Activated CD8-positive, alpha-beta T cell treated with anti-CD3 and anti-CD28 coated beads, Interleukin-2, amount 10 ng/mL, durations not matched to agents 7 days and 5 days (primary cell): ENCODE measurements at regions of chr1 and their contacts with region 1.

Region 1: DNA sequence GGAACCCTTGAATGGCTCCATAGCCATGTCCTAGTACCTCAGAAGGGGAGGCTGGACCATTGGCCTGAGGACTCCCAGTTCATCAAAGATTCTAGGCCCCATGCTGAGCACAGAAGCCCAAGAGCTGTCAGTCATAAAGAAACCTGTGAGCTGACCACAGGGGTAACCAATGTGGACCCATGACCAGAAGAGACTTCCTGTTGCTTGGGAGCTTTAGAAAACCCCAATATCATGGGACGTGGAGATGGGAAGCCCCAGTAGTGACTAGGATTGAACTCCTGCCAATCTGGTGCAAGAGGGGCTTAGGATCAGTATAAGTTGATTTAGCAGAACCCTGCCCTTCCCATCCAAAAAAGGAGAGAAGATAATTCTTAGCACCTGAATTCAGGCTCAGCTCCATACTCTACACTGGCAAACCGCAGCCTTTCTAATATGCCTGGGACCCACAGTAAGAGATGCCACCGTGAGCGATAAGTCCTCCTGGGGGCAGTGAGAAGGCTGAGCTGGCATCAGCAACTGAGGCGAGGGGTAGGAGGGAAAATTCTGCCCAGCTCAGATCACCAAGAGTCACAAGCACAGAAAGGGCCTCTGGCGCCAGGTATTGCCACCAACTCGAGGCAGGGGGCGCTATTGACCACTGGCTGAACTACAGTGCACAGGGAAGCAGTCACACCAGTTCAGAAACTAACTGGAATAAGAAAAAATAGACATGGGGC is 108.9 kb downstream of the CAPN8 start:
- DNase-seq: peak; percentile 57
- ATAC-seq: peak; percentile 53
- H3K4me3 Mint-ChIP-seq: no peak overlapping the region
- H3K27ac Mint-ChIP-seq: no peak overlapping the region
- H3K4me1 Mint-ChIP-seq: peaks cover 5% of the 10 kb centered on the region
- H3K27me3 Mint-ChIP-seq: no peaks in the 10 kb centered on the region

Region 2: GRCh38 chr1:223390618-223391017 is 166.0 kb before region 1 on chr1:
- CTCF ChIA-PET with region 1: no interaction called
- POLR2A ChIA-PET with region 1: no interaction called
- DNase-seq: no peak
- ATAC-seq: no peak
- H3K4me3 Mint-ChIP-seq: no peak overlapping the region
- H3K27ac Mint-ChIP-seq: no peak overlapping the region
- H3K4me1 Mint-ChIP-seq: no peaks in the 10 kb centered on the region
- H3K27me3 Mint-ChIP-seq: peaks cover 24% of the 10 kb centered on the region

Region 3: GRCh38 chr1:223611936-223612335 is 55.4 kb after region 1 on chr1:
- CTCF ChIA-PET with region 1: interaction called, 11 read pairs
- POLR2A ChIA-PET with region 1: interaction called, 3 read pairs
- DNase-seq: no peak
- ATAC-seq: no peak
- H3K4me3 Mint-ChIP-seq: no peak overlapping the region
- H3K27ac Mint-ChIP-seq: no peak overlapping the region
- H3K4me1 Mint-ChIP-seq: no peaks in the 10 kb centered on the region
- H3K27me3 Mint-ChIP-seq: no peaks in the 10 kb centered on the region

Region 4: DNA sequence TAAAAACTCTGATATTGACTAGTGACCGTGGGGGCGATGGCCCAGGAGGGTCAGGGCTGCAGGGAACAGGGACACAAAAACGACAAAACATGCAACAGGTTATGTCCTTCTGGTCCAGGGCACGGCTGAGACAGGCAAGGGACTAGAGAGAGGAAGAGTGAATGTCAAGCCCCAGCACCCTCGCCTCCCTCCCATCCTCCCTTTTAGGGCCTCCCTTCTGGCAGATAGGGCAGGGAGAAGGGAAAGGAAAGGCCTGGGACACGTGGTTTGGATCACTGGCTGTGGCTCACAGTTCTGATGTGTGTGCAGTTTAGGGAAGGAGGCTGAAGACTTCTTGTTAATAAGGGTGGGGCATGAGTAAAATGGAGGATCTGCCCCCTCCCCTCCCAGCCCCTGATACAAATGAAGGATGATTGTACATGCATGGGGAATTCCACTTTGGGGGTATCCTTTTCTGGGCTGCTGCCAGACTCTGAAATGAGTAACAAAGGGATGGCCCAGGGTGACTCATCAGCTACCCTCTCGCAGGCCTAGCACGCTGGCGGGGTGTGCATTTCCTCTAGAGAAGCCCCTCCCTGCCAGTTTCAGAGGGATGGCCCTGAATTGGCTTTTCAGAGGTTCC is 169.9 kb after region 1 on chr1:
- CTCF ChIA-PET with region 1: no interaction called
- POLR2A ChIA-PET with region 1: no interaction called
- DNase-seq: peak; percentile 90
- ATAC-seq: peak; percentile 100
- H3K4me3 Mint-ChIP-seq: peak overlapping the region; percentile 75
- H3K27ac Mint-ChIP-seq: peak overlapping the region; percentile 95
- H3K4me1 Mint-ChIP-seq: peaks cover 71% of the 10 kb centered on the region
- H3K27me3 Mint-ChIP-seq: no peaks in the 10 kb centered on the region

Region 5: GRCh38 chr1:223738465-223739365 is 182.1 kb after region 1 on chr1:
- CTCF ChIA-PET with region 1: no interaction called
- POLR2A ChIA-PET with region 1: no interaction called
- DNase-seq: no peak
- ATAC-seq: no peak
- H3K4me3 Mint-ChIP-seq: no peak overlapping the region
- H3K27ac Mint-ChIP-seq: no peak overlapping the region
- H3K4me1 Mint-ChIP-seq: peaks cover 9% of the 10 kb centered on the region
- H3K27me3 Mint-ChIP-seq: no peaks in the 10 kb centered on the region